ENCODE measurements at regions of chr10 and their contacts with region 1.

Region 1: GRCh38 chr10:101042667-101043355 is 11.8 kb downstream of the SFXN3 start:
- DNase-seq: peak; percentile 89 to 96 (median 92)
- ATAC-seq: peak; percentile 98
- H3K4me3 ChIP-seq: peak overlapping the region; percentile 44
- H3K27ac ChIP-seq: peak overlapping the region; percentile 80
- H3K4me1 ChIP-seq: peaks cover 13 to 21% of the 10 kb centered on the region in 2 experiments
- H3K27me3 ChIP-seq: no peaks in the 10 kb centered on the region
- CTCF ChIP-seq: no peak
- EP300 ChIP-seq: no peak
- POLR2A ChIP-seq: peak; percentile 82
- RAD21 ChIP-seq: no peak

Region 2: DNA sequence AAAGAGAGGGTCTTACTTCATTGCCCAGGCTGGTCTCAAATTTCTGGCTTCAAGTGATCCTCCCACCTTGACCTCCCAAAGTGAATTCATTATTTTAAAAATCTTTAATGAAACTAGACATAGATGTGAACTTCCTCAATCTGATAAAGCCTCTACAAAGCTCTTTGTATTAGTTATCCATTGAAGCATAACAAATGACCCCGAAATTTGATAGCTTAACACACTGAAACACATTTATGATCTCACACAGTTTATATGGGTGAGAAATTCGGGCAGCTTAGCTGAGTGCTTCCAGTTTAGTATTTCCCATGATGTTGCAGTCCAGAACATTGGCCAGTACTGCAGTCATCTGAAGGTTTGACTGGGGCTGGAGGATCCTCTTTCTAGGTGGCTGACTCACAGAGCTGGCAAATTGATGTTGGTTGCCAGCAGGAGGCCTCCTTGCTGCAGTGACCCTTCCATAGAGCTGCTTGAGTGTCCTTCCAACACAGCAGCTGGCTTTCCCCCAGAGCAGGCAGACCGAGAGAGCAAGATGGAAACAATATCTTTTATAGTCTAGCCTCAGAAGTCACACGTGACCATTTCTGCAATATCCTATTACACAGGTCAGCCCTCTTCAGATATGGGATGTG is 596.6 kb before region 1 on chr10:
- CTCF ChIA-PET with region 1: no interaction called
- POLR2A ChIA-PET with region 1: no interaction called
- in situ Hi-C with region 1: no loop called
- intact Hi-C with region 1: no loop called
- DNase-seq: peak in 1 of 4 experiments; percentile 13
- ATAC-seq: peak; percentile 33; the same call in 2 of the 3 replicates
- H3K4me3 ChIP-seq: no peak overlapping the region
- H3K27ac ChIP-seq: no peak overlapping the region
- H3K4me1 ChIP-seq: no peaks in the 10 kb centered on the region
- H3K27me3 ChIP-seq: no peaks in the 10 kb centered on the region
- CTCF ChIP-seq: no peak
- EP300 ChIP-seq: no peak
- POLR2A ChIP-seq: no peak
- RAD21 ChIP-seq: no peak; a peak in 1 of 4 replicates

Region 3: GRCh38 chr10:101060036-101060950 is 17.5 kb after region 1 on chr10:
- CTCF ChIA-PET with region 1: interaction called, 37 read pairs
- POLR2A ChIA-PET with region 1: interaction called, 13 read pairs
- in situ Hi-C with region 1: no loop called
- intact Hi-C with region 1: no loop called
- DNase-seq: peak; percentile 44 to 91 (median 63)
- ATAC-seq: peak; percentile 58
- H3K4me3 ChIP-seq: peak overlapping the region; percentile 53
- H3K27ac ChIP-seq: peak overlapping the region; percentile 100
- H3K4me1 ChIP-seq: peaks cover 34 to 49% of the 10 kb centered on the region in 2 experiments
- H3K27me3 ChIP-seq: no peaks in the 10 kb centered on the region
- CTCF ChIP-seq: peak; percentile 82 to 87 (median 84)
- EP300 ChIP-seq: no peak
- POLR2A ChIP-seq: no peak; the same call in none of the 2 replicates
- RAD21 ChIP-seq: peak; percentile 71 to 82

Region 4: GRCh38 chr10:101141616-101142532 is 99.1 kb after region 1 on chr10:
- CTCF ChIA-PET with region 1: interaction called, 7 read pairs
- POLR2A ChIA-PET with region 1: interaction called, 3 read pairs
- in situ Hi-C with region 1: no loop called
- intact Hi-C with region 1: loop called (anchors 5 kb)
- DNase-seq: peak; percentile 74 to 86 (median 78)
- ATAC-seq: peak; percentile 98
- H3K4me3 ChIP-seq: no peak overlapping the region
- H3K27ac ChIP-seq: no peak overlapping the region
- H3K4me1 ChIP-seq: peaks cover 0 to 24% of the 10 kb centered on the region in 2 experiments; a peak in 3 of 5 replicates
- H3K27me3 ChIP-seq: peaks cover 21 to 43% of the 10 kb centered on the region in 2 experiments; a peak in 4 of 5 replicates
- CTCF ChIP-seq: peak; percentile 88 to 93 (median 90)
- EP300 ChIP-seq: no peak
- POLR2A ChIP-seq: no peak
- RAD21 ChIP-seq: peak; percentile 78 to 85

Measured in K562 (cell line).